CD4-positive, alpha-beta memory T cell (primary cell): ENCODE measurements at regions of chr1 and their contacts with region 1.

Region 1: GRCh38 chr1:111719674-111720132 is 19.5 kb downstream of the INKA2 start:
- DNase-seq: no peak
- H3K4me3 ChIP-seq: no peak overlapping the region
- H3K4me3 Mint-ChIP-seq: no peak overlapping the region
- H3K27ac ChIP-seq: no peak overlapping the region
- H3K27ac Mint-ChIP-seq: peak overlapping the region in 4 of 7 donors; percentile 4 to 89 (median 50)
- H3K4me1 ChIP-seq: peaks cover 22% of the 10 kb centered on the region
- H3K4me1 Mint-ChIP-seq: peaks cover 24 to 41% (median 29%) of the 10 kb centered on the region in 4 donors
- H3K27me3 ChIP-seq: no peaks in the 10 kb centered on the region
- H3K27me3 Mint-ChIP-seq: no peaks in the 10 kb centered on the region

Region 2: GRCh38 chr1:111690306-111690617 is 29.4 kb before region 1 on chr1:
- CTCF ChIA-PET with region 1: interaction called, 10 read pairs
- POLR2A ChIA-PET with region 1: no interaction called
- intact Hi-C with region 1: no loop called
- DNase-seq: no peak
- H3K4me3 ChIP-seq: no peak overlapping the region
- H3K4me3 Mint-ChIP-seq: peak overlapping the region in 2 of 8 donors; percentile 4 to 61
- H3K27ac ChIP-seq: no peak overlapping the region
- H3K27ac Mint-ChIP-seq: peak overlapping the region; percentile 2 to 76 (median 32)
- H3K4me1 ChIP-seq: peaks cover 54% of the 10 kb centered on the region
- H3K4me1 Mint-ChIP-seq: peaks cover 46 to 78% (median 67%) of the 10 kb centered on the region in 4 donors
- H3K27me3 ChIP-seq: no peaks in the 10 kb centered on the region
- H3K27me3 Mint-ChIP-seq: no peaks in the 10 kb centered on the region

Region 3: GRCh38 chr1:111704776-111705175 is 14.9 kb before region 1 on chr1:
- CTCF ChIA-PET with region 1: interaction called, 43 read pairs
- POLR2A ChIA-PET with region 1: interaction called, 3 read pairs
- intact Hi-C with region 1: no loop called
- DNase-seq: no peak
- H3K4me3 ChIP-seq: no peak overlapping the region
- H3K4me3 Mint-ChIP-seq: no peak overlapping the region
- H3K27ac ChIP-seq: no peak overlapping the region
- H3K27ac Mint-ChIP-seq: peak overlapping the region in 1 of 7 donors; percentile 69
- H3K4me1 ChIP-seq: no peaks in the 10 kb centered on the region
- H3K4me1 Mint-ChIP-seq: peaks cover 8 to 17% (median 11%) of the 10 kb centered on the region in 4 donors
- H3K27me3 ChIP-seq: no peaks in the 10 kb centered on the region
- H3K27me3 Mint-ChIP-seq: no peaks in the 10 kb centered on the region

Region 4: GRCh38 chr1:111739194-111739924 is 19.7 kb after region 1 on chr1 and contains the start of gene INKA2:
- CTCF ChIA-PET with region 1: interaction called, 31 read pairs
- POLR2A ChIA-PET with region 1: interaction called, 19 read pairs
- intact Hi-C with region 1: loop called (anchors 2 kb)
- DNase-seq: peak; percentile 44 to 64 (median 48)
- H3K4me3 ChIP-seq: peak within 1 kb of the TSS; percentile 68 to 70
- H3K4me3 Mint-ChIP-seq: peak within 1 kb of the TSS; percentile 83 to 93 (median 89)
- H3K27ac ChIP-seq: peak within 1 kb of the TSS; percentile 37
- H3K27ac Mint-ChIP-seq: peak within 1 kb of the TSS; percentile 42 to 96 (median 86)
- H3K4me1 ChIP-seq: peaks cover 28% of the 10 kb centered on the region
- H3K4me1 Mint-ChIP-seq: peaks cover 10 to 27% (median 17%) of the 10 kb centered on the region in 4 donors
- H3K27me3 ChIP-seq: peaks cover 18% of the 10 kb centered on the region
- H3K27me3 Mint-ChIP-seq: peaks cover 6 to 18% of the 10 kb centered on the region in 2 donors
- total RNA-seq, gene INKA2: 2.2 to 2.4 TPM

Region 5: GRCh38 chr1:111747282-111747734 is 27.6 kb after region 1 on chr1:
- CTCF ChIA-PET with region 1: interaction called, 73 read pairs
- POLR2A ChIA-PET with region 1: interaction called, 5 read pairs
- intact Hi-C with region 1: loop called (anchors 1 kb)
- DNase-seq: peak; percentile 57 to 69 (median 62)
- H3K4me3 ChIP-seq: no peak overlapping the region
- H3K4me3 Mint-ChIP-seq: no peak overlapping the region
- H3K27ac ChIP-seq: no peak overlapping the region
- H3K27ac Mint-ChIP-seq: peak overlapping the region in 1 of 7 donors; percentile 29
- H3K4me1 ChIP-seq: no peaks in the 10 kb centered on the region
- H3K4me1 Mint-ChIP-seq: peaks cover 0 to 6% (median 2%) of the 10 kb centered on the region in 4 donors
- H3K27me3 ChIP-seq: no peaks in the 10 kb centered on the region
- H3K27me3 Mint-ChIP-seq: no peaks in the 10 kb centered on the region

Region 6: GRCh38 chr1:111762332-111762731 is 42.6 kb after region 1 on chr1:
- CTCF ChIA-PET with region 1: interaction called, 79 read pairs
- POLR2A ChIA-PET with region 1: interaction called, 3 read pairs
- intact Hi-C with region 1: no loop called
- DNase-seq: no peak
- H3K4me3 ChIP-seq: no peak overlapping the region
- H3K4me3 Mint-ChIP-seq: no peak overlapping the region
- H3K27ac ChIP-seq: no peak overlapping the region
- H3K27ac Mint-ChIP-seq: peak overlapping the region in 3 of 7 donors; percentile 32 to 64 (median 41)
- H3K4me1 ChIP-seq: peaks cover 2% of the 10 kb centered on the region
- H3K4me1 Mint-ChIP-seq: peaks cover 10 to 15% (median 12%) of the 10 kb centered on the region in 4 donors
- H3K27me3 ChIP-seq: no peaks in the 10 kb centered on the region
- H3K27me3 Mint-ChIP-seq: no peaks in the 10 kb centered on the region

Region 7: GRCh38 chr1:111769517-111770146 is 49.9 kb after region 1 on chr1:
- CTCF ChIA-PET with region 1: interaction called, 79 read pairs
- POLR2A ChIA-PET with region 1: no interaction called
- intact Hi-C with region 1: loop called (anchors 1 kb)
- DNase-seq: peak; percentile 54 to 64 (median 59)
- H3K4me3 ChIP-seq: no peak overlapping the region
- H3K4me3 Mint-ChIP-seq: no peak overlapping the region
- H3K27ac ChIP-seq: no peak overlapping the region
- H3K27ac Mint-ChIP-seq: peak overlapping the region in 5 of 7 donors; percentile 7 to 55 (median 38)
- H3K4me1 ChIP-seq: no peaks in the 10 kb centered on the region
- H3K4me1 Mint-ChIP-seq: peaks cover 0 to 3% (median under 1%) of the 10 kb centered on the region in 4 donors
- H3K27me3 ChIP-seq: no peaks in the 10 kb centered on the region
- H3K27me3 Mint-ChIP-seq: no peaks in the 10 kb centered on the region

Region 8: GRCh38 chr1:111856411-111857185 is 136.9 kb after region 1 on chr1:
- CTCF ChIA-PET with region 1: no interaction called
- POLR2A ChIA-PET with region 1: no interaction called
- intact Hi-C with region 1: no loop called
- DNase-seq: no peak
- H3K4me3 ChIP-seq: no peak overlapping the region
- H3K4me3 Mint-ChIP-seq: no peak overlapping the region
- H3K27ac ChIP-seq: no peak overlapping the region
- H3K27ac Mint-ChIP-seq: no peak overlapping the region
- H3K4me1 ChIP-seq: no peaks in the 10 kb centered on the region
- H3K4me1 Mint-ChIP-seq: no peaks in the 10 kb centered on the region
- H3K27me3 ChIP-seq: peaks cover 4% of the 10 kb centered on the region
- H3K27me3 Mint-ChIP-seq: peaks cover 27 to 36% of the 10 kb centered on the region in 2 donors